PC-9 (cell line): ENCODE measurements at regions of chr7 and their contacts with region 1.

Region 1: DNA sequence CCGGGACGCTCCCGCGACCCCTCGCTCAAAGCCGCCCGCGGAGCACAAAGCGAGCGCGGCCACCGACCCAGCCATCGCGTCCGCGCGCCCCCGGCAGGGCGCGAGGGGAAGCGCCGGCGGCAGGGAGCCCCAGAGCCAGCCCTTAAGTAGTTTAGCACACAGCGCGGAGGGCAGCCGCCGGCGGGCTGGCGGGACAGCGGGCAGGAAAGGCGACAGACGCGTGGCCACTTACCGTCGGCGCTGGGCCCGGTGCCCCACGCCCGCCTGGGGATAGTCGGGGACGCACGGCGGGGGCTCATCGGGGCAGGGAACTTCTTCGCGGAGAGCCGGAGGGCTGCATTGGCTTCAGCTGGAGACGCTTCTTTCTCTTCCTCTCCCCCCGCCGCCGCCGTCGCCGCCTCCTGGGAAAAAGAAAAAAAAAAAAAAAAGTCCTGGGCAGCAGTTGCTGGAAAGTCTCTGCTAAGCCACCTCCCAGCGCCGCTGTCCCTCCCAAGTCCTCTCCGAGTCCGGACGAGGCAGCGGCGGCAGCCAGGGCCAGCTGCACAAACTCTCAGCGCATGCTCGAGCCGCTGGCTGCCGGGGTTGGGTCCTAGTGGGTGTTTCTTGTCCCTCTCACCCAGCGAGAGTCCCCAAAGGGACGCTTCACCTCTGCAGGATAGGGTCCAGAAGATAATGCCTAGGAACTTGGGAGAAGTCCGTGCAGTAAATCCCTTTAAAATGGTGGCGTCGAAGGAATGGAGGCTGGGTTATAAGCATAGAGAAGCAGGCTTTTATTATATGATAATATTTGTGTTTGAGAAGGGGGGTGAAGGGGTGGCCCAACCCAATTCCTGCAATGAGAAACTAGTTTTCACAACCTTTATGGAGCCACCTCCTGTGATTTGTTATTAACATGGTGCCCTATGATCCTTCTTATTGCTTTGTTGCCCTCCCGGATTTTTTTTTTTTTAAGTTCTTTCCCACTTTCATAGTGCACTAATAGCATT is at the start of gene TSPAN12:
- DNase-seq: peak; percentile 64 to 90
- H3K4me3 ChIP-seq: peak within 1 kb of the TSS; percentile 90
- H3K27ac ChIP-seq: peak within 1 kb of the TSS; percentile 45
- H3K4me1 ChIP-seq: peaks cover 14% of the 10 kb centered on the region
- H3K27me3 ChIP-seq: no peaks in the 10 kb centered on the region
- CTCF ChIP-seq: peak; percentile 64
- total RNA-seq, gene TSPAN12: 5.8 and 6.1 TPM in 2 replicates

Region 2: DNA sequence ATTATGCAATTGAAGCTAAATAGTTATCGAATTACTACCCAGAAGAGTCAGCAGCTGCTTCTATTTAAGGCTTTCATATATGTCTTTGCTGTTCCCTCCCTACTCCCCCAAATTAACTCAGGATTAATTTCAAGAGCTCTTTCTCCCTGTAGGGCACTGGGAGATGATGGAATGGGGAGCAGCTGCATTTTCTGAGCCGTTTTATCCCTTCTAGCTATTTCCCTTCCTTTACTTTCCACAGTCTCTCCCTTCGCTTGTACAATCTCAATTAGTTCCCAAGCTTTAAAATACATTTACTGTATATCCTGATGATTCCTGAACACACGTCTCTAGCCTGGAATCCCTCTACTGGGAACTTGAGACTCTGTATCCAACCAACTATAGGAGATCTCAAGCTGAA is 19.8 kb after region 1 on chr7:
- CTCF ChIA-PET with region 1: interaction called, 6 read pairs
- POLR2A ChIA-PET with region 1: no interaction called
- intact Hi-C with region 1: loop called (anchors 2 kb)
- DNase-seq: no peak
- H3K4me3 ChIP-seq: no peak overlapping the region
- H3K27ac ChIP-seq: no peak overlapping the region
- H3K4me1 ChIP-seq: peaks cover 17% of the 10 kb centered on the region
- H3K27me3 ChIP-seq: no peaks in the 10 kb centered on the region
- CTCF ChIP-seq: no peak

Region 3: GRCh38 chr7:121102619-121103018 is 244.7 kb after region 1 on chr7:
- CTCF ChIA-PET with region 1: no interaction called
- POLR2A ChIA-PET with region 1: no interaction called
- intact Hi-C with region 1: loop called (anchors 5 kb)
- DNase-seq: peak; percentile 68 to 90
- H3K4me3 ChIP-seq: peak overlapping the region; percentile 31; the same call in 1 of the 2 replicates
- H3K27ac ChIP-seq: peak overlapping the region; percentile 83
- H3K4me1 ChIP-seq: peaks cover 24% of the 10 kb centered on the region
- H3K27me3 ChIP-seq: no peaks in the 10 kb centered on the region
- CTCF ChIP-seq: no peak